Activated CD4-positive, alpha-beta memory T cell treated with anti-CD3 and anti-CD28 coated beads for 36 hours (primary cell): ENCODE measurements at regions of chr13 and their contacts with region 1.

Region 1: DNA sequence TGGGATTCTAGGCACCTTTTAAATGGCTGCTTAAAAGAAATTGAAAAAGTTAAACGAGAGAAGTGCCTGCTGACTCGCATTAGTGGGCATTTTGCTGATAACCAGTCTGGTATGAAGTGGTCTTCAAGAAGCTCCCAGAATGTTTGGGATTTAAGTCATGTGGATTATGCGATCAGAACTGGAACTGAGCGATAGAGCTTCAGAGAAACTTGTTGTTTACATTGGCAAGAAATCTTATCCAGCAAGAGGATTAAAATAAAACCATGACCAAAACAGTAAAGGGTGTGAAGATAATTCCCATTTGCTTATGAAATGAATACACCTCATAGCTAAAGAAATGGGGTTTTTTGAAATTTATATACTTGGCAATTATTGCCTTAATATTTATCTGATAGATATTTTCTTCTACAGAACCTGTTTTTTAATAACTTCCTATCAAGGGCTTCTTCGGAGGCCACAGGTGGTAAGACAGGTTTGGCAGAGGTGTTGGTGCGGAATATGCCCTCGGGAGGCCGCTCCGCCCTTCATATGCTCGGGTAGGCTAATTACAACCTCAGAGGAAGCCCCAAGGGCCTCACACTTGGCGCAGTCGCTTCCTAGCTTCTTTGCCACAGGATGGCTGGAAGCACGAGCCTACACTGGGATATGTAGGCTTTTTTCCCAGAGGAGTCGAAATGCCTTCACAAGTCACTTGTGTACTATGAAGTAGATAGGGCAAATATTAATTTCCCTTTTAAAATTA is 68.6 kb downstream of the LMO7 start:
- DNase-seq: no peak
- H3K4me3 Mint-ChIP-seq: no peak overlapping the region
- H3K27ac Mint-ChIP-seq: no peak overlapping the region
- H3K4me1 Mint-ChIP-seq: peaks cover 8% of the 10 kb centered on the region
- H3K27me3 Mint-ChIP-seq: no peaks in the 10 kb centered on the region

Region 2: GRCh38 chr13:75687150-75687763 is 17.5 kb before region 1 on chr13:
- CTCF ChIA-PET with region 1: no interaction called
- POLR2A ChIA-PET with region 1: no interaction called
- intact Hi-C with region 1: loop called (anchors 1 kb)
- DNase-seq: no peak
- H3K4me3 Mint-ChIP-seq: no peak overlapping the region
- H3K27ac Mint-ChIP-seq: no peak overlapping the region
- H3K4me1 Mint-ChIP-seq: peaks cover 14% of the 10 kb centered on the region
- H3K27me3 Mint-ChIP-seq: no peaks in the 10 kb centered on the region

Region 3: DNA sequence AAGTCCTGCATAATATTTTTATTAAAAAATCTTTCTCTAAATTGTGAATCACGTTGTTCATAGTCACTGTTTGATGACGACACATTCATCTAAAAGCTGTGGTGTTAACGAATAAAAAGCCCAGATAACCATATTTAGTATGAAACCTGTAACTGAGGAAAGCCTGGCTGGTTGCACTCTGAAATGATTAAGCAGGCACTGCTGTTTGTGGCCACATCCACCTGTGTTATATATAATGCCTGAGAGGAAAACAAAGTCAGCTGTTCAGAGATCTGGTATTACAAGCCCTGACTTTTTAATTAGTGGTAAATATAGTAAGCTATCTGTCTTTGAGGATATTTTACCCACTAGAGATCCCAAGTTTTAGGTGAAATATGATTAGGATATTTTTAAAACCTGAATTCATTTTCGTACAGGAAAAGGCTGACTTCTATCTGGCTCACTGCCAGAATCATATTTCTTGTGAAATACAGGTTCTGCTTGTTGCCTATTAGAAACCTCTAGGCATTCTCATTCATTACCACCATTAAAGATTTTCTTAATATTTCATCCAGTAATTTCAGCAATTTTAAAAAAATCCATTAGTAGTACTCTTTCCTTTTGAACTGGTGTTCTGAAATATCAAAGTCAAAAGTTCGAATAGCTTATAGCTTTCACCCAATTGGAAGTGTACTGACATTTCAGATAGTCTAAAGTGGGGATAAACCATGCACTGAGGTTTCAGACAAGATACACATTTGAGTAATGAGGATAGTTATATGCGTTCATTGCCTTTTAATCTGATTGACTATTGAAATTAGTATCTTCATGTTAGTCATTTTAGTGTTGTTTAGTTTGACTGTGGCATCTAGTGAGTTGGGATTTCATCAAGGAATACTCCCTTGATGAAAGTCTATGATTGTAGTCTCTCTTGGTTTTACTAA is 11.1 kb after region 1 on chr13:
- CTCF ChIA-PET with region 1: no interaction called
- POLR2A ChIA-PET with region 1: no interaction called
- intact Hi-C with region 1: loop called (anchors 1 kb)
- DNase-seq: peak; percentile 16
- H3K4me3 Mint-ChIP-seq: no peak overlapping the region
- H3K27ac Mint-ChIP-seq: no peak overlapping the region
- H3K4me1 Mint-ChIP-seq: peaks cover 6% of the 10 kb centered on the region
- H3K27me3 Mint-ChIP-seq: no peaks in the 10 kb centered on the region

Region 4: DNA sequence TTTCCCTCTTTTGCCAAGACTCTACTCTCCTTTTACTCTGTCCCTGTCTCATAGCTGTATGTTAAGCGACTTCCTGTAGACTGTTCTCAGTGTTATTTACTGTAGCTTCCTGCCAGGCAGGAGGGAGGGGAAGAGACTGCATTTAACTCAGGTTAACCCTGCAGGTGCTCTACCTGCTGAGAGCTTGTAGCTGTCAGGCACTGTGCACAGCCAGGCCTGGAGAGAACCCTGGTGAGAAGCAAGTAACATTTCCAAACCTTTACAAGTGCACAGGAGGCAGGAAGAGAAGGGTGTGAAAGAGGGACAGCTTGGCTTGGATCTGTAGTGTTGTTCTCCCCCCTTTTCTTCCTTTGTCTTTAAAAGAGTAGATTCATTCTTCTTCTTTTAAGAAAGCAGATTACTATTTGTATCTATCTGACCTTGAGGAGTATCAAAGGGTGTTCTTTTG is 98.4 kb after region 1 on chr13:
- CTCF ChIA-PET with region 1: no interaction called
- POLR2A ChIA-PET with region 1: no interaction called
- intact Hi-C with region 1: loop called (anchors 1 kb)
- DNase-seq: no peak
- H3K4me3 Mint-ChIP-seq: no peak overlapping the region
- H3K27ac Mint-ChIP-seq: no peak overlapping the region
- H3K4me1 Mint-ChIP-seq: peaks cover 42% of the 10 kb centered on the region
- H3K27me3 Mint-ChIP-seq: no peaks in the 10 kb centered on the region

Region 5: GRCh38 chr13:75978818-75979217 is 274.1 kb after region 1 on chr13:
- CTCF ChIA-PET with region 1: no interaction called
- POLR2A ChIA-PET with region 1: no interaction called
- intact Hi-C with region 1: no loop called
- DNase-seq: no peak
- H3K4me3 Mint-ChIP-seq: no peak overlapping the region
- H3K27ac Mint-ChIP-seq: no peak overlapping the region
- H3K4me1 Mint-ChIP-seq: no peaks in the 10 kb centered on the region
- H3K27me3 Mint-ChIP-seq: peaks cover 1% of the 10 kb centered on the region